Naive thymus-derived CD4-positive, alpha-beta T cell (primary cell): ENCODE measurements at regions of chr19 and their contacts with region 1.

Region 1: DNA sequence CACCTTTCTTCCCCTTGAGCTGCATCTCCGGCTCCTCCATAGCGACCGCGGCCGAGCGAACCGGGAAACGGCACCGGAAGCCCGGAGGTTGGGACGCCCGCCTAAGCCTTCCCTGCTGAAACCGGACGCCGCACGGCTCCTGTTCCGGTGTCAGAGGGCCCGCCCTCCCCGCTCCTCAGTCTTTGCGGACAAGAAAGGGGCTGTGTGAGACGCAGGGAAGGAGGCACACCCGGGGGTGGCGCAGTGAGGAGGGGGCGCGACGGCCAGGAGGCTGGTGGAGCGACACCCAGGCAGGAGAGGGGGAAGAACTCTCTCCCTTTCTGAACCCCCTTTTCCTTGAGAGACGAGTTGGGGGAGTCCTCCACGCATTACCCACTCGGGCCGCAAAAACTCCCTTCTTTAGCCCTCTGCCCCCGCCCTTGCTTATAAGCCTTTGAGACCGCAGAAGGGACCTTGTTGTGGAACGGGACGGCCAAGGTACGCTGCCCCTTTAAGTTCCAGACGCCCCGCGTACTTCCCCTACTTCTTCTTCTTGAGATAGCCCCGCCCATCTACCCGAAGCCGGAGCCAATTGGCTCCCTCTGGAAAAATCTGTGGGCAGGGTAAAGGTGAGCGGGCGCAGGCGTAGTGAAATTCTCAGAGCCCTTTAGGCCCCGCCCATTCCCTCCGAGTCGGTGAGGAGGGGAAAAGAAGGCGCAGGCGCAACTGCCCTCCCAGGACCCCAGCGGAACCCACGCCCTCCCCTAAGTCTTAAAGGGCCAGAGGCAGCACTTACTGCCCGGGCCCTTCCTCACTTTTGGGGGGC is at the starts of genes BORCS8 and RFXANK:
- DNase-seq: peak; percentile 89 to 99 (median 99)
- ATAC-seq: peak; percentile 95
- H3K4me3 ChIP-seq: peak within 1 kb of the TSS; percentile 100
- H3K4me3 Mint-ChIP-seq: peak within 1 kb of the TSS; percentile 94 to 100 (median 98)
- H3K27ac ChIP-seq: peak within 1 kb of the TSS; percentile 100
- H3K27ac Mint-ChIP-seq: peak within 1 kb of the TSS; percentile 99 to 100 (median 99)
- H3K4me1 ChIP-seq: peaks cover 13 to 22% of the 10 kb centered on the region in 2 donors
- H3K4me1 Mint-ChIP-seq: peaks cover 23 to 68% (median 45%) of the 10 kb centered on the region in 7 donors
- H3K27me3 ChIP-seq: no peaks in the 10 kb centered on the region
- H3K27me3 Mint-ChIP-seq: no peaks in the 10 kb centered on the region
- total RNA-seq, gene BORCS8: 22.6 to 48.2 (median 42.7) TPM
- total RNA-seq, gene RFXANK: 60.8 to 114 (median 74.9) TPM

Region 2: DNA sequence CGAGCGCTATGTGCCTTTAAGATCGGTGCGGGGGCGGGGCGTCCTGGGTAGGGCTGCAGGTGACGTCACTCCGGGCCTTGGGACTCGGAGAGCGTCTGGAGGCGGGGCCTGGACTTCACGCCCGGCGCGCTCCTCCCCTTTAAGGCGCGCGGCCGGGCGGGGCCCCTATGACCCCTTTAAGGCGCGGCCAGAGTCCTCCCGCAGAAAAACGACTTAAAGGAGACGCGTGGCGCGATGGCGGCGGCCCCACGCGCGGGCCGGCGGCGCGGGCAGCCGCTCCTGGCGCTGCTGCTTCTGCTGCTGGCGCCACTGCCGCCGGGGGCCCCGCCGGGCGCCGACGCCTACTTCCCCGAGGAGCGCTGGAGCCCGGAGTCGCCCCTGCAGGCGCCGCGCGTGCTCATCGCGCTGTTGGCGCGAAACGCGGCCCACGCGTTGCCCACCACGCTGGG is 1636.8 kb before region 1 on chr19 and contains the start of gene COLGALT1:
- CTCF ChIA-PET with region 1: no interaction called
- POLR2A ChIA-PET with region 1: no interaction called
- intact Hi-C with region 1: loop called in 1 of 2 experiments (anchors 5 kb)
- DNase-seq: peak; percentile 92 to 99 (median 96)
- ATAC-seq: peak; percentile 99
- H3K4me3 ChIP-seq: peak within 1 kb of the TSS; percentile 81
- H3K4me3 Mint-ChIP-seq: peak within 1 kb of the TSS; percentile 73 to 90 (median 84)
- H3K27ac ChIP-seq: peak within 1 kb of the TSS; percentile 76
- H3K27ac Mint-ChIP-seq: peak within 1 kb of the TSS in 6 of 9 donors; percentile 36 to 80 (median 66)
- H3K4me1 ChIP-seq: peaks cover 16% of the 10 kb centered on the region in 2 donors
- H3K4me1 Mint-ChIP-seq: peaks cover 8 to 29% (median 20%) of the 10 kb centered on the region in 7 donors
- H3K27me3 ChIP-seq: no peaks in the 10 kb centered on the region
- H3K27me3 Mint-ChIP-seq: no peaks in the 10 kb centered on the region
- total RNA-seq, gene COLGALT1: 50.1 to 70.6 (median 61.3) TPM

Region 3: GRCh38 chr19:19033426-19034203 is 158.7 kb before region 1 on chr19 and contains the starts of genes ARMC6 and SUGP2:
- CTCF ChIA-PET with region 1: no interaction called
- POLR2A ChIA-PET with region 1: no interaction called
- intact Hi-C with region 1: loop called (anchors 1 kb)
- DNase-seq: peak; percentile 84 to 96 (median 94)
- ATAC-seq: peak; percentile 87
- H3K4me3 ChIP-seq: peak within 1 kb of the TSS; percentile 84
- H3K4me3 Mint-ChIP-seq: peak within 1 kb of the TSS; percentile 88 to 100 (median 96)
- H3K27ac ChIP-seq: peak within 1 kb of the TSS; percentile 86
- H3K27ac Mint-ChIP-seq: peak within 1 kb of the TSS; percentile 86 to 100 (median 94)
- H3K4me1 ChIP-seq: peaks cover 14 to 16% of the 10 kb centered on the region in 2 donors
- H3K4me1 Mint-ChIP-seq: peaks cover 16 to 40% (median 36%) of the 10 kb centered on the region in 7 donors
- H3K27me3 ChIP-seq: no peaks in the 10 kb centered on the region
- H3K27me3 Mint-ChIP-seq: no peaks in the 10 kb centered on the region
- total RNA-seq, gene ARMC6: 14.0 to 32.6 (median 15.0) TPM
- total RNA-seq, gene SUGP2: 116 to 145 (median 129) TPM

Region 4: DNA sequence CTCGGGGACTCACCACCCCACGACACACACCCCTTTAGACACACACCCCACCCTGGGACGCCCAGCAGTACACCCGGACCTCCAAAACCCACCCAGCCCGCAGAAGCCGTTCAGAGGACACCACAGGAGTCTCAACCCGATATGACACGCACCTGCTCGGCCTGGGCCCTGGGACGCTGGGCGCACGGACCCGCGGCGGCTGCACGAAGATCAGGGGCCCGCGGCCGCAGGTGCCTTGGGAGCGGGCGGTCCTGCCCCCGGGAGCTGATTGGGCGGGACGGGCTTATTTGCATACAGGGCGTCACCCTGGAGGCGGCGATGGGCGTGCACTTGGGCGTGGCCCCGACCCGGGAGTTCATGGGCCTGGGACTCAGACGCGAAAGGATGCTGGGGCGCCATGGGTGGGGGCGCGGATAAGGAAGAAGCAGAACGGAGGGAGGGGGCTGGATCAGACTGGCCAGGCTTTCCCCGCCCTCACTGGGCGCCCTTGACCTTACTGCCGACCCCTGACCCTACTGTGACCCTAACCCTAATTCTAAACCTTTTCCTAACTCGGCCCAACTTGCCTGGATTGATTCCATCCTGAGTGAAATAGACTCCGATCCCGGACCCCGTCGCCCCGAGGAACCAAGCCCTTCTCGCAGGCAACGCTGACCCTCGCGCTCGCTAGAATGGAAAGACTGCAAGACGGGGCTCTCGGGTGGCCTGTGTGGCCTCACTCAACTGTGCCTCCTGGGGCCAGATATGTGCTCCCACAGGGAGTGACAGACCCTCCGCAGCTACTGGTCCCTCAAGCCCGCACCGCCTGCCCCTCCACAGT is 22.0 kb before region 1 on chr19 and contains the start of gene MEF2B:
- CTCF ChIA-PET with region 1: interaction called, 3 read pairs
- POLR2A ChIA-PET with region 1: interaction called, 5 read pairs
- intact Hi-C with region 1: loop called in 1 of 2 experiments (anchors 1 kb)
- DNase-seq: peak; percentile 45 to 84 (median 77)
- ATAC-seq: peak; percentile 98
- H3K4me3 ChIP-seq: peak within 1 kb of the TSS; percentile 32
- H3K4me3 Mint-ChIP-seq: peak within 1 kb of the TSS; percentile 2 to 84 (median 71)
- H3K27ac ChIP-seq: no peak within 1 kb of the TSS
- H3K27ac Mint-ChIP-seq: peak within 1 kb of the TSS in 8 of 9 donors; percentile 25 to 70 (median 51)
- H3K4me1 ChIP-seq: peaks cover 0 to 10% of the 10 kb centered on the region in 2 donors
- H3K4me1 Mint-ChIP-seq: peaks cover 14 to 20% (median 17%) of the 10 kb centered on the region in 7 donors
- H3K27me3 ChIP-seq: no peaks in the 10 kb centered on the region
- H3K27me3 Mint-ChIP-seq: peaks cover 0 to 5% (median 0%) of the 10 kb centered on the region in 5 donors
- total RNA-seq, gene MEF2B: 3.0 to 6.4 (median 4.9) TPM

Region 5: DNA sequence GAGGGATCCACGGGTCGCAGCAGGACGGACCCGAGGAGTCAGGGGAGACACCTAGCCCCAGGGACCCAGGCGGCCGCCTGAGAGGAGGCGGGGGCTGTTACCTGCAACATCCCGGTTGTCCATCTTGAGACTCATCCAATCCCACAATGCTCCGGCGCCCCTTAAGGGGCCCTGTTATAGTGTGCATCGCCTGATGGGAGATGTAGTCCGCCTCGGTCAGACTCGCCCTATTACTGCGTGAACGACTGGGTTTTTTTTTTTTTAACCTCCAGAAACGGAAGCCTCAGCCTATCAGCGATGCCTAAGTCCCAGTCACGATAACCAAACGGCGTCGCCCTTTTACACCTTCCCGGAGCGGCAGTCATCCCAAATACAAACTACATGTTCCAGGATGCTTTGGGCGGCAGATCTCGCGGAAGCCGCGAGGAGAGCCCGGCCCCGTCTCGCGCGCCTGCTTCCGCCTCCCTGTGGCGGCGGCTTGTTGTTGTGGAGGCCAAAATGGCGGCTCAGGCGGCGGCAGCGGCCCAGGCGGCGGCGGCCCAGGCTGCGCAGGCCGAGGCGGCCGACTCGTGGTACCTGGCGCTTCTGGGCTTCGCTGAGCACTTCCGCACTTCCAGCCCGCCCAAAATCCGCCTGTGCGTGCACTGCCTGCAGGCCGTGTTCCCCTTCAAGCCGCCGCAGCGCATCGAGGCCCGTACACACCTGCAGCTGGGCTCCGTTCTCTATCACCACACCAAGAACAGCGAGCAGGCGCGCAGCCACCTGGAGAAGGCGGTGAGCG is 128.3 kb after region 1 on chr19 and contains the starts of genes MAU2 and SUGP1:
- CTCF ChIA-PET with region 1: interaction called, 4 read pairs
- POLR2A ChIA-PET with region 1: no interaction called
- intact Hi-C with region 1: loop called (anchors 1 kb)
- DNase-seq: peak; percentile 78 to 94 (median 91)
- ATAC-seq: peak; percentile 94
- H3K4me3 ChIP-seq: peak within 1 kb of the TSS; percentile 89
- H3K4me3 Mint-ChIP-seq: peak within 1 kb of the TSS; percentile 93 to 100 (median 98)
- H3K27ac ChIP-seq: peak within 1 kb of the TSS; percentile 95
- H3K27ac Mint-ChIP-seq: peak within 1 kb of the TSS; percentile 96 to 100 (median 99)
- H3K4me1 ChIP-seq: peaks cover 23 to 30% of the 10 kb centered on the region in 2 donors
- H3K4me1 Mint-ChIP-seq: peaks cover 20 to 66% (median 44%) of the 10 kb centered on the region in 7 donors
- H3K27me3 ChIP-seq: no peaks in the 10 kb centered on the region
- H3K27me3 Mint-ChIP-seq: no peaks in the 10 kb centered on the region
- total RNA-seq, gene MAU2: 93.7 to 170 (median 136) TPM
- total RNA-seq, gene SUGP1: 59.7 to 96.6 (median 77.5) TPM

Region 6: GRCh38 chr19:19404879-19405860 is 212.9 kb after region 1 on chr19 and contains the start of gene GATAD2A:
- CTCF ChIA-PET with region 1: no interaction called
- POLR2A ChIA-PET with region 1: interaction called, 3 read pairs
- intact Hi-C with region 1: loop called (anchors 1 to 5 kb)
- DNase-seq: peak; percentile 85 to 99 (median 90)
- ATAC-seq: peak; percentile 96
- H3K4me3 ChIP-seq: peak within 1 kb of the TSS; percentile 65
- H3K4me3 Mint-ChIP-seq: peak within 1 kb of the TSS; percentile 89 to 97 (median 94)
- H3K27ac ChIP-seq: peak within 1 kb of the TSS; percentile 86
- H3K27ac Mint-ChIP-seq: peak within 1 kb of the TSS; percentile 86 to 98 (median 92)
- H3K4me1 ChIP-seq: peaks cover 26 to 38% of the 10 kb centered on the region in 2 donors
- H3K4me1 Mint-ChIP-seq: peaks cover 37 to 70% (median 66%) of the 10 kb centered on the region in 7 donors
- H3K27me3 ChIP-seq: no peaks in the 10 kb centered on the region
- H3K27me3 Mint-ChIP-seq: no peaks in the 10 kb centered on the region
- total RNA-seq, gene GATAD2A: 97.9 to 123 (median 116) TPM

Region 7: DNA sequence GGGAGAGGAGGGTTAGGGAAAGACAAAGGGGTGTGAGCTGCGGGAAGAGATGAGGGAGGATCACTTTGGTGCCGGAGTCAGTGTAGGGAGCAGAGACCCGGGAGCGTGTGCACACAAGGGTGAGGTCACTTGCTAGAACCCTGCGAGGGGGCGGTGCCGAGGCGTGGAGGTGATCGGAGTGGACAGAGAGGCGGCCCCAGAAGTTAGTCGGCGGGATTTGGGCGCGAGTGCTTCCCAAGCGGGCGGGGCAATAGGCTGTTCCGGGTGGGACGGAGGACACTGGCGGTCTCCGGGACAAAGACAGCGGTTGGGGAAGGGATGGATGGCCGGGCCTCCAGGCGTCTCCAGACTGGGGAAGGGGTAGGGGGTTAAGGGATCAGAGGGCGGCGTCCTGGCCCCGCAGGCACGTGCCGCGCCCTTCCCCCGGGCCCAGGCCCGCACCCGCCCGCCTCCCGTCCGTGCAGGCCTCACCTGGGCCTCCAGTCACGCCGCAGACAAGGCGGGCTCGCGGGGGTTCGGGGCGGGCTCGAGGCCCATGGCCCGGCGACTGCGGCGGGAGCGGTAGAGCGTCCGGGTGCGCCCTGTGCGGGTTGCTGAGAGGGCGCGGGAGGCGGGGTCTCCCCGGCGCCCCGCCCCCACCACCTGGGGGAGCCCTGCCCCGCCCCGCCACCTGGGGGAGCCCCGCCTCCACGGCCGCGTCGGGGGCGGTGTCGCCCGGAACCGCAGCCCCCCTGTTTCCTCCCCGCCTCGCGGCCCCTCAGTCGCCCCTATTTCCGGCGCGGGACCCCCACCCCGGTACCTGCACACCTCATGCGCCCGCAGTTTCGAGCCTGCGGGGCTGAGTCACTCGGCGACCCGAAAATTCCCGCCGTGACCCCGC is 435.6 kb after region 1 on chr19 and contains the start of gene LPAR2:
- CTCF ChIA-PET with region 1: no interaction called
- POLR2A ChIA-PET with region 1: no interaction called
- intact Hi-C with region 1: loop called in 1 of 2 experiments (anchors 10 kb)
- DNase-seq: peak; percentile 73 to 90 (median 82)
- ATAC-seq: peak; percentile 95
- H3K4me3 ChIP-seq: peak within 1 kb of the TSS; percentile 79
- H3K4me3 Mint-ChIP-seq: peak within 1 kb of the TSS; percentile 91 to 100 (median 96)
- H3K27ac ChIP-seq: peak within 1 kb of the TSS; percentile 92
- H3K27ac Mint-ChIP-seq: peak within 1 kb of the TSS; percentile 86 to 98 (median 95)
- H3K4me1 ChIP-seq: peaks cover 6 to 18% of the 10 kb centered on the region in 2 donors
- H3K4me1 Mint-ChIP-seq: peaks cover 17 to 32% (median 27%) of the 10 kb centered on the region in 7 donors
- H3K27me3 ChIP-seq: no peaks in the 10 kb centered on the region
- H3K27me3 Mint-ChIP-seq: no peaks in the 10 kb centered on the region
- total RNA-seq, gene LPAR2: 64.4 to 91.7 (median 75.0) TPM

Region 8: GRCh38 chr19:19677579-19677978 is 485.3 kb after region 1 on chr19:
- CTCF ChIA-PET with region 1: no interaction called
- POLR2A ChIA-PET with region 1: no interaction called
- intact Hi-C with region 1: no loop called
- DNase-seq: no peak
- ATAC-seq: no peak
- H3K4me3 ChIP-seq: peak overlapping the region; percentile 22
- H3K4me3 Mint-ChIP-seq: peak overlapping the region in 6 of 10 donors; percentile 9 to 71 (median 48)
- H3K27ac ChIP-seq: no peak overlapping the region
- H3K27ac Mint-ChIP-seq: peak overlapping the region in 4 of 9 donors; percentile 28 to 58 (median 45)
- H3K4me1 ChIP-seq: no peaks in the 10 kb centered on the region
- H3K4me1 Mint-ChIP-seq: peaks cover 0 to 26% (median 17%) of the 10 kb centered on the region in 7 donors
- H3K27me3 ChIP-seq: no peaks in the 10 kb centered on the region
- H3K27me3 Mint-ChIP-seq: no peaks in the 10 kb centered on the region